Cardiac septum (tissue), 1 donor: ENCODE measurements at regions of chr9 and their contacts with region 1.

Region 1: GRCh38 chr9:73200694-73201452 is 49.2 kb downstream of the ANXA1 start:
- DNase-seq: no peak

Region 2: DNA sequence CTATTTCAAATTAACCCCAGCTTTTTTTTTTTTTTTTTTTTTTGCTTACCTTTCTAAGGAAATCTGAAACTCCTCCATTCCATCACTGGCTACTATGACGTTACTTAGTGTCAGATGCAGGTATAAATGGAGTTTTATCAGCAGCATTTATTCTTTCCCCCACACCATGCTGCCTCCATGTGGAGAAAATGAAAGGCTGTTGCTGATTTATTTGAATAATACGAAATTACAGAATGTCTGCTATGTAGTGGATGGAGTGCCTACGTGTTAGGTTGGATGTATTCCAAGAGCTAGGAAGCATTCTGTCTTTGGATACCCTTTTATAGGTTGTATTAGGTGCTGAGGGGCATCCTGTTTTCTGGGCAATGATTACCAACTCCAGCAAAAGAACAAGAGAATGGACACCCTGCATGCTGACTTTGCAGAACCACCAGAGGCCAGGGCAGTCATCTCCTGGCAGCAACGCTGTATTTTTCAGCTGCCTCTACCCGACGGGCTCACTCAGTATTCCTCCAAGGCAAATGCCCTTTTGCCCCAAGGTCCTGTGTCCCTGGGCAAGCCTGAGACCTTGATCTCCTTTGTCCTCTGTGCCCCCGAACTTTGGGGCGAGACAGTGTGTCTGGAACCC is 447.5 kb before region 1 on chr9:
- intact Hi-C with region 1: no loop called
- DNase-seq: no peak

Region 3: DNA sequence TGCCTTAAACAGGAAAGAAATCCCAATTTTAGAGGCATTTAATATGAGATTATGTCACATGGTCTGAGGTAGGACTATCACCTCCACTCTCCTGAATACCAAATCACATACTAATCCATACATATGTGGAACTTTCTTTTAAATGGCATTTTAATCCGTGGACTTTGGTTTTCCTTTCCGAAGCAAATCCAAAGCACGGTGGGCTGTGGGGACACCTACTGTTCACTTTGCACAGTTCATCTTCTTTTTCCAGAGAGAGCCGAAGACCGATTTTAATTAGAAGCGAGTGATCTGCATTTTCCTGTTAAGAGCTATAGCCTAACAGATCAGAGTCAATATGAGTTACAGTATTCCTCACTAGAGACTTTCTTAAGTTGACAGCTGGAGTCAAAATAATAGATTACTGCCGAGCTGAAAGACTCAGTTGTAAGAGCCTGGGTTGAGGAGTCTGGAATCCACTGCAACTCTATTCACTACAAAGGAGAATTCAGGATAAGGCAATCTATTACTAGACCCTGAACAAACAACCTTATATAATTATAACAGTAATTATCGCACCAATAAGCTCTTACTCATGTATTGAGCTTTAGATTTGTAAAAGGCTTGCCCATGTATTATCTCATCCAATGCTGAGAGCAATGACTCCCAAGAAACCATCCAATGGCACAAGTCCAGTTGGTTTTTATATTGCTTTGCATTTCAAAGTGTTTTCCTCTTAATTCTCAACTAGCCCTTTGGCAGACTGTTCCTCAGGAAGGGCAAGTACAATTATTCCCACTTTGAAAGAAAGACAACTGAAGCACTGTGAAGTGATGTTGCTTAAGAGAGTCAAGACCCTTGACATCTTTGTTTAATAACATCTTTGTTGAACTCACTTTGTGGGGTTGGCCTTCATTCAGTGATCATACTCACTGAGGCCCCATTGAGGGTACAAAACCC is 1542.2 kb after region 1 on chr9:
- intact Hi-C with region 1: loop called (anchors 10 kb)
- DNase-seq: no peak